Posterior cingulate gyrus (tissue), 11 donors: ENCODE measurements at regions of chr1 and their contacts with region 1.

Region 1: GRCh38 chr1:180863158-180863775 is 49.4 kb upstream of the KIAA1614 start:
- DNase-seq: peak in 1 of 10 donors; percentile 34

Region 2: GRCh38 chr1:180515864-180516388 is 347.3 kb before region 1 on chr1:
- intact Hi-C with region 1: loop called (anchors 5 kb)
- DNase-seq: peak in 9 of 10 donors; percentile 28 to 95 (median 69)

Region 3: GRCh38 chr1:180533266-180533987 is 329.8 kb before region 1 on chr1:
- intact Hi-C with region 1: loop called (anchors 5 kb)
- DNase-seq: peak in 8 of 10 donors; percentile 32 to 92 (median 68)